GM12878 (cell line): ENCODE measurements at regions of chr6 and their contacts with region 1.

Region 1: DNA sequence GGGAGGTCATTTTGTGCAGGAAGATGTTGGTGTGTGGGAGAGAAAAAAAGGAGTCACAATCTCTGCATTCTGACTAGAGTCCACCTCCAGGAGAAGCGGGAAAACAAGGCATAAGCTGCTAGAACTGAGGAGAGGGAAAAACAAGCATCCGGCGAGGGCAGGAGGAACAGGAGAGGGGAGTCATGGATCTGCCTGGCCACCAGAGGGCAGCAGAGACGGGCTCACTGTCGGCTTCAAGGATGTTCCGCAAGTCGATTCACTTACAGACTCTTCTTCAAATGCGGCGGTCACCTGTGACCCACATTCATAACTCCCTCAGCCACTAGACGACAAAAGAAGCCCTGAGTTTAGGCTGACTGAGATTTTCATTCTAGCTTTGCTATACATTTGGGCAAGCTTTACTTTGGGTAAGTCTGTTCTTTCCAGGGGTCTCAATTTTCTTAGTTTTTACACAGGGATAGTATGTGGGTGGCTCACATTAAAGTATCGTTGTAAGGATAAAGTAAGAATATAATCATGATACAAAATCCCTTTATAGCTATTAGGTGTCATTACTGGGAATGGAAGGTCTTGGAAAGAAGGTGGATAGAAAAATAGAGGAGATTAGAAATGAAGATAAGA is 6.6 kb upstream of the BTNL2 start:
- DNase-seq: peak; percentile 40
- ATAC-seq: peak; percentile 94
- H3K4me3 ChIP-seq: no peak overlapping the region
- H3K27ac ChIP-seq: no peak overlapping the region
- H3K4me1 ChIP-seq: no peaks in the 10 kb centered on the region
- H3K27me3 ChIP-seq: no peaks in the 10 kb centered on the region; a peak in 2 of 4 replicates
- CTCF ChIP-seq: peak; percentile 84 to 96 (median 94)
- EP300 ChIP-seq: no peak
- POLR2A ChIP-seq: no peak
- RAD21 ChIP-seq: peak; percentile 83

Region 2: GRCh38 chr6:32166411-32167061 is 247.0 kb before region 1 on chr6:
- CTCF ChIA-PET with region 1: no interaction called
- POLR2A ChIA-PET with region 1: no interaction called
- RAD21 ChIA-PET with region 1: no interaction called
- SMC1A ChIA-PET with region 1: no interaction called
- in situ Hi-C with region 1: no loop called
- intact Hi-C with region 1: no loop called
- DNase-seq: no peak
- ATAC-seq: no peak
- H3K4me3 ChIP-seq: no peak overlapping the region
- H3K27ac ChIP-seq: no peak overlapping the region
- H3K4me1 ChIP-seq: no peaks in the 10 kb centered on the region
- H3K27me3 ChIP-seq: no peaks in the 10 kb centered on the region
- CTCF ChIP-seq: no peak
- EP300 ChIP-seq: no peak
- POLR2A ChIP-seq: no peak
- RAD21 ChIP-seq: no peak

Region 3: GRCh38 chr6:32255199-32256153 is 158.1 kb before region 1 on chr6:
- CTCF ChIA-PET with region 1: interaction called, 12 read pairs
- POLR2A ChIA-PET with region 1: no interaction called
- RAD21 ChIA-PET with region 1: interaction called, 3 read pairs
- SMC1A ChIA-PET with region 1: interaction called, 3 read pairs
- in situ Hi-C with region 1: no loop called
- intact Hi-C with region 1: no loop called
- DNase-seq: no peak
- ATAC-seq: peak; percentile 93
- H3K4me3 ChIP-seq: no peak overlapping the region
- H3K27ac ChIP-seq: no peak overlapping the region; the same call in 1 of the 2 replicates
- H3K4me1 ChIP-seq: peaks cover 10% of the 10 kb centered on the region
- H3K27me3 ChIP-seq: no peaks in the 10 kb centered on the region
- CTCF ChIP-seq: peak; percentile 42 to 70 (median 50)
- EP300 ChIP-seq: no peak
- POLR2A ChIP-seq: no peak
- RAD21 ChIP-seq: peak; percentile 42; the same call in 1 of the 2 replicates

Region 4: GRCh38 chr6:32402812-32403211 is 10.7 kb before region 1 on chr6:
- CTCF ChIA-PET with region 1: interaction called, 20 read pairs
- POLR2A ChIA-PET with region 1: no interaction called
- RAD21 ChIA-PET with region 1: interaction called, 3 read pairs
- SMC1A ChIA-PET with region 1: interaction called, 10 read pairs
- in situ Hi-C with region 1: no loop called
- intact Hi-C with region 1: no loop called
- DNase-seq: no peak
- ATAC-seq: no peak
- H3K4me3 ChIP-seq: no peak overlapping the region
- H3K27ac ChIP-seq: no peak overlapping the region
- H3K4me1 ChIP-seq: peaks cover 4% of the 10 kb centered on the region
- H3K27me3 ChIP-seq: peaks cover 2 to 4% of the 10 kb centered on the region in 2 experiments; a peak in 1 of 4 replicates
- CTCF ChIP-seq: no peak
- EP300 ChIP-seq: no peak
- POLR2A ChIP-seq: no peak
- RAD21 ChIP-seq: no peak

Region 5: DNA sequence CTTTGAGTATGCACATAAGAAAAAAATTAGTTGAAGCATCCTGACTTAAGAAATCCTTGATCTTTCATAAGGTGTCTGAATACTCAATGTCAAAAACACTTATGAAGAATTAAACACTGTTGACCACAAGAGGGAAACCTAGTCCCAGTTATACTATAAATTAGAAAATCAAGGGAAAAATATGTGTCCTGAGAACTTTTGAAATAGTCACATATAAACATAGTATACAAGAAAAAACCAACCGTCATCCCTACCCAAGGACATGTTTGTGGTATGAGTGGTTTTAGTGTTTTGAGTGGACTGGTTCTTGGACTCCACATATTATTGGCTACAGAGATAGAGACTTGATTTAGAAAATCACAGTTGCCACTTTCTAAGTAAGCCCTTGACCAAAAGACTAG is 18.5 kb after region 1 on chr6:
- CTCF ChIA-PET with region 1: interaction called, 25 read pairs
- POLR2A ChIA-PET with region 1: no interaction called
- RAD21 ChIA-PET with region 1: interaction called, 10 read pairs
- SMC1A ChIA-PET with region 1: interaction called, 38 read pairs
- in situ Hi-C with region 1: no loop called
- intact Hi-C with region 1: no loop called
- DNase-seq: no peak
- ATAC-seq: peak; percentile 55
- H3K4me3 ChIP-seq: no peak overlapping the region
- H3K27ac ChIP-seq: no peak overlapping the region
- H3K4me1 ChIP-seq: peaks cover 10% of the 10 kb centered on the region
- H3K27me3 ChIP-seq: no peaks in the 10 kb centered on the region
- CTCF ChIP-seq: peak in 2 of 3 experiments; percentile 41 to 62; a peak in 4 of 6 replicates
- EP300 ChIP-seq: no peak
- POLR2A ChIP-seq: no peak
- RAD21 ChIP-seq: peak; percentile 76

Region 6: DNA sequence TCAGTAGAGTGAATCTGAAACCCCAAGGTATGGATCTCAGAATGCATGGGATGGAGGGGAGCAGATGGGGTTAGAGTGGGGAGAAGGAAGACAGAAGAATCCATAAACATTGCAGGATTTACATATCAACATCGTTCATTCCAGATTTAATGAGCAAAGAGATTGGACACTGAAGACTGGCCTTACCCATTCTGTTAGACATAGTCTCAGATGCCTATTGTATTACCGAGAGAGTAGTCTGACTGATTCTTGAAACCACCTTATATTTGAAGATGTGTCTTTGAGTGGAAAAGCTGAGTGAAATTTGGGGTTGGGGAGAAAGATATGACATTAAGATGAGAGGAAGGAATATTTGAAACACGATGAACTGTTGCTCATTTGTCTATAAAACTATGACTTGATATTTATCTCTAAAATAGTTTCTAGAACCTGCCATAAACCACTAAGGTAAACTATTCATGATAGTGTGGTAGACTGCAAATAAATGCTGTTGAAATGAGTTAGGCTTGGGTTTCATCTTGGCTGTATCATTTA is 31.9 kb after region 1 on chr6:
- CTCF ChIA-PET with region 1: no interaction called
- POLR2A ChIA-PET with region 1: no interaction called
- RAD21 ChIA-PET with region 1: no interaction called
- SMC1A ChIA-PET with region 1: no interaction called
- in situ Hi-C with region 1: no loop called
- intact Hi-C with region 1: no loop called
- DNase-seq: no peak
- ATAC-seq: peak; percentile 44
- H3K4me3 ChIP-seq: no peak overlapping the region
- H3K27ac ChIP-seq: no peak overlapping the region
- H3K4me1 ChIP-seq: peaks cover 4% of the 10 kb centered on the region; the same call in 1 of the 2 replicates
- H3K27me3 ChIP-seq: no peaks in the 10 kb centered on the region
- CTCF ChIP-seq: no peak
- EP300 ChIP-seq: no peak
- POLR2A ChIP-seq: no peak; the same call in 1 of the 2 replicates
- RAD21 ChIP-seq: no peak